ENCODE measurements at regions of chr11 and their contacts with region 1.

Region 1: GRCh38 chr11:2901854-2902783 is 16.5 kb upstream of the CDKN1C start:
- DNase-seq: peak; percentile 96 to 97
- H3K4me3 ChIP-seq: peak overlapping the region; percentile 68
- H3K4me3 Mint-ChIP-seq: peak overlapping the region; percentile 76
- H3K27ac Mint-ChIP-seq: peak overlapping the region; percentile 81
- H3K4me1 ChIP-seq: peaks cover 32% of the 10 kb centered on the region
- H3K4me1 Mint-ChIP-seq: peaks cover 22% of the 10 kb centered on the region
- H3K27me3 ChIP-seq: no peaks in the 10 kb centered on the region
- H3K27me3 Mint-ChIP-seq: no peaks in the 10 kb centered on the region
- CTCF ChIP-seq: no peak

Region 2: GRCh38 chr11:2678396-2678795 is 223.7 kb before region 1 on chr11:
- CTCF ChIA-PET with region 1: interaction called, 9 read pairs
- POLR2A ChIA-PET with region 1: interaction called, 17 read pairs
- intact Hi-C with region 1: no loop called
- DNase-seq: no peak
- H3K4me3 ChIP-seq: no peak overlapping the region
- H3K4me3 Mint-ChIP-seq: no peak overlapping the region
- H3K27ac Mint-ChIP-seq: no peak overlapping the region
- H3K4me1 ChIP-seq: 0 out of 2 replicates have a peak, but pooled peaks cover 2% of the 10 kb centered on the region
- H3K4me1 Mint-ChIP-seq: peaks cover 12% of the 10 kb centered on the region
- H3K27me3 ChIP-seq: no peaks in the 10 kb centered on the region
- H3K27me3 Mint-ChIP-seq: no peaks in the 10 kb centered on the region
- CTCF ChIP-seq: no peak

Region 3: GRCh38 chr11:2825889-2826678 is 76.0 kb before region 1 on chr11:
- CTCF ChIA-PET with region 1: no interaction called
- POLR2A ChIA-PET with region 1: no interaction called
- intact Hi-C with region 1: no loop called
- DNase-seq: peak in 1 of 2 experiments; percentile 51
- H3K4me3 ChIP-seq: no peak overlapping the region
- H3K4me3 Mint-ChIP-seq: no peak overlapping the region
- H3K27ac Mint-ChIP-seq: peak overlapping the region; percentile 21
- H3K4me1 ChIP-seq: peaks cover 16% of the 10 kb centered on the region
- H3K4me1 Mint-ChIP-seq: peaks cover 8% of the 10 kb centered on the region
- H3K27me3 ChIP-seq: no peaks in the 10 kb centered on the region
- H3K27me3 Mint-ChIP-seq: no peaks in the 10 kb centered on the region
- CTCF ChIP-seq: no peak

Region 4: GRCh38 chr11:2912498-2912897 is 10.4 kb after region 1 on chr11:
- CTCF ChIA-PET with region 1: no interaction called
- POLR2A ChIA-PET with region 1: interaction called, 4 read pairs
- intact Hi-C with region 1: loop called (anchors 1 kb)
- DNase-seq: peak; percentile 93 to 94
- H3K4me3 ChIP-seq: no peak overlapping the region
- H3K4me3 Mint-ChIP-seq: no peak overlapping the region
- H3K27ac Mint-ChIP-seq: peak overlapping the region; percentile 80
- H3K4me1 ChIP-seq: peaks cover 33% of the 10 kb centered on the region
- H3K4me1 Mint-ChIP-seq: peaks cover 22% of the 10 kb centered on the region
- H3K27me3 ChIP-seq: no peaks in the 10 kb centered on the region
- H3K27me3 Mint-ChIP-seq: no peaks in the 10 kb centered on the region
- CTCF ChIP-seq: no peak

Region 5: GRCh38 chr11:3146612-3147256 is 244.6 kb after region 1 on chr11:
- CTCF ChIA-PET with region 1: no interaction called
- POLR2A ChIA-PET with region 1: no interaction called
- intact Hi-C with region 1: no loop called
- DNase-seq: no peak
- H3K4me3 ChIP-seq: no peak overlapping the region
- H3K4me3 Mint-ChIP-seq: no peak overlapping the region
- H3K27ac Mint-ChIP-seq: no peak overlapping the region
- H3K4me1 ChIP-seq: peaks cover 22% of the 10 kb centered on the region
- H3K4me1 Mint-ChIP-seq: peaks cover 17% of the 10 kb centered on the region
- H3K27me3 ChIP-seq: no peaks in the 10 kb centered on the region
- H3K27me3 Mint-ChIP-seq: peaks cover 8% of the 10 kb centered on the region
- CTCF ChIP-seq: no peak